ENCODE measurements at regions of chr2 and their contacts with region 1.

Region 1: DNA sequence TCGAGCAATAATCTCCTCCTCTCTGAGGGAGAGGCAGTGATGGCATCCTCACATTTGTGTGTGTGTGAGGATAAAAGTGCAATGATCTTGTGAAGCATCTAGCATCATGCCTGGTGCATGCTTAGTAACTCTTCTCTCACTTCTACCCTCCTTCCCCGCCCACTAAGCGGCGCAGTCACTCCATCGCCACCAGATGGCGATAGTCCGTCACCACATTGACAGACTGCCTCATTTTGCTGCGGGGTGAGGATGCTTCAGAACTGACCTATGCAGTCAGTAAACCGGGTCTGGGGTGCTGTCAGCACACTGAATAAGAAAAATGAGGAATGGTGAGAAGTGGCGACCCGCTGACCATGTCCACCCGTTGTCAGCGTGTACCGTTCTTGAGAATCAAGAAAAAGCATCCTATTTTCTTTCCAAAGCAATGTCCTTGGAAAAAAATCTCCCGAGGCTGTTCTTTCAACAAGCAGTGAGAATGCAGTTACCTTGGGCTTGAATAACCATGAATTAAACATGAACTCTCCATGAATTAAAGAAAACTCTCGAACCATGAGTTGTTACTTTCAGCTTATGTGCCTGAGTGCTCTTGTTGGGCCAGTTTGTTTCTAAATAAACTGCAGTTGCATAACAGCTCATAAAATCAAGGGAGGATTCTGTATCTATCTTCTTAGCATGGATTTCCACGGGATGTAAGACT is 37.3 kb upstream of the TMEM177 start:
- DNase-seq: peak; percentile 66 to 87 (median 83)
- ATAC-seq: peak; percentile 82 to 91
- H3K4me3 ChIP-seq: no peak overlapping the region
- H3K27ac ChIP-seq: no peak overlapping the region
- H3K4me1 ChIP-seq: no peaks in the 10 kb centered on the region
- H3K27me3 ChIP-seq: no peaks in the 10 kb centered on the region

Region 2: DNA sequence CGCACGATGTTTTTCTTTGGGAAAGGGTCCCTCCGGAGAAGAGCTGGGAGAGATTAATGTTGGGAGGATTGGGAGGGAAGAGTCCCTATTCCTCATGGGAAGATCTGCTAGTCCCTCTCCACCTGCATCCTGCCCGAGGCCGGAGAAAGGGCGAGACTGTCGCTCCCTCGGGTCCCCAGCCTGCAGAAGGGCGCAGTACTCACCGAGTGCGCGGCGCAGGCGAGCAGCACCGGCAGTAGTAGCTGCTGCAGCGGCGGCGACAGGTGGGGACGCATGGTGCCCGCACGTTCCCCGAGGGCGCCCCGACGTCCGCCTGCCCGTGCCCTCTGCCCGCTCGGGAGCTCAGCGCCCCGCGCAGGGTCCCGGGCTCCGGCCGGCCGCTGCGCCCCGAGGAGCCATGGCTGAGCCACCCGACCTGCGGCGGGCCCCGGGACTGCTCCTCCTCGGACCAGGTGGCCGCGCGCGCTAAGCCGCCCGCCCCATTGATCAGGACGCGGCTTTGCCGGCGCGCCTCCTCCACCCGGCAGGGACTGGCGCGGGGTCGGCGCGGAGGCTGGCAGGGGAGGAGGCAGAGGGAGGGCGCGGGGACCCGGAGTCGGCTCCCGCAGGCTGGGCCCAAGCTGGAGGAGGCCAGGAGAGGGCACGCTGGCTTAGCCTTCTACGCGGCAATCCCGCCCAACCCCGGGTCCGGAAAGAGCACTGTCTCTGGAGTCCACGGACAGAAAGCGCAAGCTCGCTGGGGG is 117.6 kb before region 1 on chr2 and contains the start of gene SCTR:
- intact Hi-C with region 1: loop called in 1 of 4 experiments (anchors 10 kb)
- DNase-seq: no peak
- ATAC-seq: peak; percentile 20 to 62
- H3K4me3 ChIP-seq: peak within 1 kb of the TSS; percentile 4
- H3K27ac ChIP-seq: no peak within 1 kb of the TSS
- H3K4me1 ChIP-seq: no peaks in the 10 kb centered on the region
- H3K27me3 ChIP-seq: no peaks in the 10 kb centered on the region
- total RNA-seq, gene SCTR: 0.38 to 0.40 TPM in 2 of 4 donors, not detected in the others